Aorta (tissue), 5 donors: ENCODE measurements at regions of chr12 and their contacts with region 1.

Region 1: DNA sequence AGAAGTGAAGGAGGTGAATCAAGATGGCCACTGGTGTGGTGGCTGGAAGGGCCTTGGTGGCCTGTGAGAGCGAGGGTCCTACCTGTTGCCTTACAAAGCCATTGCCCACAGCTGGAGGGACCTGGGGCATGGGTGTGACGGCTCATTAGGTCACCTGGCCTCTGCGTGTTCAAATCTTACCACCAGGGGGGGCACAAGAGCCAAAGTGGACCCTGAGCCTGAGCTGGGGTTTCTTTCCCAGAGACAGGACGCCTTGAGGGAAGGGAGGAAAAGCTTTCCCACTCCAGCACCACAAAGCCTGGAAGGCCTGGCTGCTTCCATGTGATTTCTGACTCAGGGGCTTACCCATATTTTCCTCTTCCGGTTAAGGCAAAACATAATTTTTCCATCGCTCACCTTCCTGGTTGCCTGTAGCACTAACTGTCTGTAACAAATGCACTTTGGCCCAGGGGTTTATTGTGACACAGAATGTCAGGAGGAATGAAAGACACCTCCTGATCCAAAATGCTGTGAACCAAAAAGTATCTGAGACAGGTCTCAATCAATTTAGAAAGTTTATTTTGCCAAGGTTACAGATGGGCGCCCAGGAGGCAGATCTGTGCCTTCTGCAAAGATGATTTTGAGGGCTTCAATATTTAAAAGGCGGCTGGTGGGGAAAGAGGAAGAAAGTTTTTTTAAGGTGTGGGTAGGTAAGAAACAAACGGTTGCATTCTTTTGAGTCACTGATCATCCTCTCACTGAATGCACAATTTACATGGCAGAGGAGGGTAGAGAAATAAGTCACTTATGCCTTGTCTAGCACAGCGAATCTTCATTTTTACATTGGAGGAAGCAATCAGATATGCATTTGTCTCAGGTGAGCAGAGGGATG is 4.3 kb upstream of the CD9 start:
- DNase-seq: peak; percentile 87 to 93
- ATAC-seq: peak; percentile 85
- H3K4me3 ChIP-seq: no peak overlapping the region
- H3K27ac ChIP-seq: no peak overlapping the region
- H3K4me1 ChIP-seq: no peaks in the 10 kb centered on the region
- H3K27me3 ChIP-seq: no peaks in the 10 kb centered on the region

Region 2: GRCh38 chr12:5808981-5809380 is 386.9 kb before region 1 on chr12:
- intact Hi-C with region 1: no loop called
- DNase-seq: no peak
- ATAC-seq: no peak
- H3K4me3 ChIP-seq: no peak overlapping the region
- H3K27ac ChIP-seq: no peak overlapping the region
- H3K4me1 ChIP-seq: no peaks in the 10 kb centered on the region
- H3K27me3 ChIP-seq: no peaks in the 10 kb centered on the region

Region 3: DNA sequence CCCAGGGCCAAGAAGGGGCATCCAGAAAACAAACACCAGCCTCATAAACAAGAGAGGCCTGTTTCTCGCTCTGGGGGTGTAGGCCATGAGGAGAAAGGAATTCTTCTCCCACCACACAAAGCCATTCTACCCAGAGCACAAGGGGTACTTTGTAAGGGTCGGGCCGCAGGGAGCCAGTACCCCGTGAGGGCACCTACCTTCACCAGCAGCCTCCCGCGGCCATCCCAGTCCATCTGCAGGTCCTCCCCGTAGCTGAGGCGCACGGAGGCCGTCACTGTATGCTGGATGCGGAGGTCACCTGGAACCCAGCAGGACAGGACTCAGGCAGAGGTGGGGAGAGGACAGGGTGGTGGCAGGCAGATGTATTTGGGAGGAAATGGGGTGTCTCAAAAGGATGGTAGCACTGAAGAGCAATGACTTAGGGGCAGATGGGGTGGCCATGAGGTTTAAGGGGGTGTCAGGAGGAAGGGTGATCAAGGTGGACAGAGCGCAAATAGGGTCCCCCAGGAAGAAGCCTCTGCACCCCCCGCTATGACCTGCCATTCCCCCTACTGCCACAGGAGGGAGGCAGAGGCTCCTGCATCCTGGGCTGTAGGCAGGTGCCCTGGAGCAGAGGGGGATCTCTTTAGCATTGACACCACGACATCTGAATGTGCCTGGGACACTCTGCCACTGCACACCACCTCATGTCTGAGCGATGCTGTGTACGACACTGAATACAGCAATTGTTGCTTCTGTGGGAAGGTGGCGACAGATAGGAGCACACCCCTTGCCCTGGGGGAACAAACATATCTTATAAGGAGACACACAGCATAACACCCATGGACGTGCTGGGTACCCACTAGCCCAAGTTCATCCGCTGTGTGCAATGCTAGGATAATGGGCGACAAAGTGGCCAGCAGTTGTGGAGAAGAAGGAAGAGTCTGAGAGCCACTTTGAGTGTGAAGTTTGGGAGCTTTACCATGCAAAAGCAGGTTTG is 132.9 kb before region 1 on chr12:
- intact Hi-C with region 1: loop called (anchors 5 kb)
- DNase-seq: peak in 1 of 2 donors; percentile 66
- ATAC-seq: peak; percentile 68
- H3K4me3 ChIP-seq: no peak overlapping the region
- H3K27ac ChIP-seq: no peak overlapping the region
- H3K4me1 ChIP-seq: no peaks in the 10 kb centered on the region
- H3K27me3 ChIP-seq: no peaks in the 10 kb centered on the region

Region 4: DNA sequence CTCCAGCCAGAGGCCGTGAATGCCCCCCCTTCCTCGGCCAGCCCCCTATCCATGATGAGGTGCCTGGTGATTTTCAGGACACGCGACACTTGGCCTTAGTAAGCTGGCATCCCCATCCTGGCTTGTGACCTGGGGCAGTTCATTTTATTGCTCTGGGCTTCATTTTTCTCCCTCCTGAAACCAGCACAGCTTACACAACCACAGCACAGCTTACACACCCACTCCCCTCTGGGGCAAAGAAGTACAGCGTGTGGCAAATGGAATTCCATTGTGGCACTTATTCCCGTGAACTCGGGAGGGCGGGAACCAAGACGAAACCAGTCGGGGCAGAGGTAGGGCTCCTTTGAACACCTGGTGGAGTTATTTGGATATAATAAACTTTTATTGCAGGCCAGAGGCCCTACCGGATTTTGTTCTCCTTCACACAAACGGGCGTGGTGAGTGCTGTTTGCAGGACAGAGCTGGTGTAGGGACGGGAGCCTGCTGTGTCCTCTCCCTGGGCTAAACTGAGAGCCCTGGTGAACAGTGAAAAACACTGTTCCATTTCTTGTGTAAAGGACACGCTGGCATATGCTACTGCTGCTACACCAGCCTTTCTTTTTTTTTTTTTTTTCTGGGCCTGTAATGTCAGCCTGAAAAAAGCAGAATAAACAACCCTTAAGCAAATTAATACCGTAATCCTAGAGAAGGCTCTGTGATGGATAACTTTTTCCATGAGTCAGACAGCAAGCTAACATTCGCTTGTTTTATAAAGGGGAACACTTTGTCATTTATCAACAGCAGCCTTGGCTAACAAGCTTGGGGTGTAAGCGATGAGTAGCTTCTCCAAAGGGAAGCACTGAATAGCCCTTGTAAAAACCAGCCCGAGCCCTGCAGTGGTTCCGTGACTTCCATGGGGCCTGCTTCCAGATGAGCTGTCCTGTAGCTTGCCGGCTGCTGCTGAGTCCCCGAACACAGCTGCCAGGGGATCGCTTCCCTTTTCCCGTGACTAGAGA is 33.6 kb after region 1 on chr12:
- intact Hi-C with region 1: loop called in 1 of 2 experiments (anchors 2 kb)
- DNase-seq: peak; percentile 88 to 91
- ATAC-seq: peak; percentile 67
- H3K4me3 ChIP-seq: no peak overlapping the region
- H3K27ac ChIP-seq: peak overlapping the region; percentile 95 to 98
- H3K4me1 ChIP-seq: peaks cover 3 to 10% of the 10 kb centered on the region in 2 donors
- H3K27me3 ChIP-seq: no peaks in the 10 kb centered on the region

Region 5: GRCh38 chr12:6235421-6235871 is 39.5 kb after region 1 on chr12:
- intact Hi-C with region 1: loop called in 1 of 2 experiments (anchors 5 kb)
- DNase-seq: peak in 1 of 2 donors; percentile 37
- ATAC-seq: no peak
- H3K4me3 ChIP-seq: no peak overlapping the region
- H3K27ac ChIP-seq: no peak overlapping the region
- H3K4me1 ChIP-seq: peaks cover 0 to 1% of the 10 kb centered on the region in 2 donors
- H3K27me3 ChIP-seq: no peaks in the 10 kb centered on the region

Region 6: DNA sequence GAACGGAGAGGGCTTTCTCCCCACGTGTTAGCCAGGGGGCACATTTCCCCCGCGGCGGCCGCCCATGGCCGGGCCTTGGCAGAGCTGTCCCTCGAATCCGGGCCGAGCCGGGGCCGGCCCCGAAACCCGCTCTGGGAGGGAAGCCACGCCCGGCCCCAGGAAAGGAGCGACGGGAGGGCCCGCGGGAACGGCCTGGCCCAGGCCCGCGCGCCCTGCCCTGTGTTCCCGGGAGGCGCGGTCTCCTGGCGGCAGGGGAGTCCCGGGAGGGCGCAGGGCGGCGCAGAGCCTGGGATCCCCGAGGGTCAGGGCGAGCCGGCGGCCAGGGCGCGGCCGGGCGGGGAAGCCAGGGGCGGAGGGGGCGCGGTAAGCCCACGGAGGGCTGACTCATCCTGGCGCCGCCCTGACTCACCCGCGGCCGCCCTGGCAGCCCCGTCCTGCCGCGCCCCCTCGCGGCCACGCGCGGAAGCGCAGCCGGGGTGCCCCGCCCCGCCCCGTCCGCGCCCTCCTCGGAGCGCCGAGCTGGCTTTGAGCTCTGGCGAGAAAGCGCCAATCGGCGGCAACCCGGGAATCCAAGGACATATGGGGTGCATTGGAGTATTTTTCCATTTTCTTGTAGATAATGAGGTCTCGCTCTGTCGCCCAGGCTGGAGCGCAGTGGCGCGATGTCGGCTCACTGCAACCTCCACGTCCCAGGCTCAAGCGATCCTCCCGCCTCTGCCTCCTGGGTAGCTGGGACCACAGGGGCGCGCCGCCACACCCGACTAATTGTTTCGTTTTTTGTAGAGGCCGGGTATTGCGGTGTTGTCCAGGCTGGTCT is 82.7 kb after region 1 on chr12:
- intact Hi-C with region 1: loop called (anchors 1 to 2 kb)
- DNase-seq: peak; percentile 92 to 96
- ATAC-seq: peak; percentile 93
- H3K4me3 ChIP-seq: peak overlapping the region in 1 of 2 donors; percentile 59
- H3K27ac ChIP-seq: peak overlapping the region in 1 of 2 donors; percentile 34
- H3K4me1 ChIP-seq: no peaks in the 10 kb centered on the region
- H3K27me3 ChIP-seq: no peaks in the 10 kb centered on the region

Region 7: GRCh38 chr12:6323340-6323994 is 127.6 kb after region 1 on chr12:
- intact Hi-C with region 1: no loop called
- DNase-seq: peak in 1 of 2 donors; percentile 64
- ATAC-seq: peak; percentile 57
- H3K4me3 ChIP-seq: no peak overlapping the region
- H3K27ac ChIP-seq: peak overlapping the region; percentile 38 to 80
- H3K4me1 ChIP-seq: no peaks in the 10 kb centered on the region
- H3K27me3 ChIP-seq: no peaks in the 10 kb centered on the region

Region 8: DNA sequence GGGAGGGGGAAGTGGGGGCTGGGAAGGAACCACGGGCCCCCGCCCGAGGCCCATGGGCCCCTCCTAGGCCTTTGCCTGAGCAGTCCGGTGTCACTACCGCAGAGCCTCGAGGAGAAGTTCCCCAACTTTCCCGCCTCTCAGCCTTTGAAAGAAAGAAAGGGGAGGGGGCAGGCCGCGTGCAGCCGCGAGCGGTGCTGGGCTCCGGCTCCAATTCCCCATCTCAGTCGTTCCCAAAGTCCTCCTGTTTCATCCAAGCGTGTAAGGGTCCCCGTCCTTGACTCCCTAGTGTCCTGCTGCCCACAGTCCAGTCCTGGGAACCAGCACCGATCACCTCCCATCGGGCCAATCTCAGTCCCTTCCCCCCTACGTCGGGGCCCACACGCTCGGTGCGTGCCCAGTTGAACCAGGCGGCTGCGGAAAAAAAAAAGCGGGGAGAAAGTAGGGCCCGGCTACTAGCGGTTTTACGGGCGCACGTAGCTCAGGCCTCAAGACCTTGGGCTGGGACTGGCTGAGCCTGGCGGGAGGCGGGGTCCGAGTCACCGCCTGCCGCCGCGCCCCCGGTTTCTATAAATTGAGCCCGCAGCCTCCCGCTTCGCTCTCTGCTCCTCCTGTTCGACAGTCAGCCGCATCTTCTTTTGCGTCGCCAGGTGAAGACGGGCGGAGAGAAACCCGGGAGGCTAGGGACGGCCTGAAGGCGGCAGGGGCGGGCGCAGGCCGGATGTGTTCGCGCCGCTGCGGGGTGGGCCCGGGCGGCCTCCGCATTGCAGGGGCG is 338.2 kb after region 1 on chr12 and contains the start of gene GAPDH:
- intact Hi-C with region 1: no loop called
- DNase-seq: peak; percentile 96 to 97
- ATAC-seq: peak; percentile 90
- H3K4me3 ChIP-seq: peak within 1 kb of the TSS; percentile 60 to 75
- H3K27ac ChIP-seq: peak within 1 kb of the TSS; percentile 61 to 87
- H3K4me1 ChIP-seq: no peaks in the 10 kb centered on the region
- H3K27me3 ChIP-seq: peaks cover 0 to 1% of the 10 kb centered on the region in 2 donors
- total RNA-seq, gene GAPDH: 1,856 to 2,021 TPM